ENCODE measurements at regions of chr5 and their contacts with region 1.

Region 1: GRCh38 chr5:127875235-127876021 is 172.2 kb downstream of the CCDC192 start:
- DNase-seq: no peak
- ATAC-seq: peak; percentile 42
- H3K4me3 Mint-ChIP-seq: no peak overlapping the region
- H3K27ac Mint-ChIP-seq: no peak overlapping the region
- H3K4me1 Mint-ChIP-seq: no peaks in the 10 kb centered on the region
- H3K27me3 Mint-ChIP-seq: peaks cover 2% of the 10 kb centered on the region
- CTCF ChIP-seq: no peak

Region 2: DNA sequence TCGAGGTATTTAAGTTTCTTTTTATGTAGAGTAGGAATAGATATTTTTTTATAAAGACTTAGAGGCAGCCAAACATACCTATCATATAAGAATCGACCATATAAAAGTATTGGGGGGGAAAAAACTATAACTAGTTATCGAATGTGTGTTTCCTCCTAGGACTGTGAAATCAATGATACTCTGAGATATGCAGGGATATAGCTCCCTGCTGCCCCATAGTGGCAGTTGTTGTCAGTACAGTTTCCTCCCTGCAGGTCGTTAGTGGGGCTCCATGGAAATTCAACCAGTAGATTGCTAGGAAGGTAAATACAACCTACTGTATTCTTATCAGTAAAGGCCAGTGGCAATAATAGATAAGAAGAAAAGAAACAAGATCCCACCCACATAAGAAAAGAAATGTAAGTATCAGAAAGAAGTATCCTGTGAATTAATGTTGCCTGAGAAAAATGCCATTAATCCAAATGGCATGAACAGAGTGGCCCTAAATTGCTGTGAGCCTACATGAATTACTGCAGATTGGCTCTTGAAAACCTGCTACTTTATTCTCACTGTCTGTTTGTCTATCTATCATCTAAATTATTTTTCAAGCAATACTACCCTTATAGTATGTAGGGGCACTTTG is 799.5 kb after region 1 on chr5:
- CTCF ChIA-PET with region 1: no interaction called
- POLR2A ChIA-PET with region 1: no interaction called
- intact Hi-C with region 1: loop called (anchors 5 kb)
- DNase-seq: no peak
- ATAC-seq: peak; percentile 34
- H3K4me3 Mint-ChIP-seq: no peak overlapping the region
- H3K27ac Mint-ChIP-seq: no peak overlapping the region
- H3K4me1 Mint-ChIP-seq: no peaks in the 10 kb centered on the region
- H3K27me3 Mint-ChIP-seq: no peaks in the 10 kb centered on the region
- CTCF ChIP-seq: no peak

Measured in activated B cell treated with CpG ODN at 0.5 μM for 24 hours (primary cell).